Posterior cingulate gyrus (tissue), 11 donors: ENCODE measurements at regions of chr14 and their contacts with region 1.

Region 1: GRCh38 chr14:42224053-42224888 is 617.6 kb downstream of the LRFN5 start:
- DNase-seq: peak in 7 of 10 donors; percentile 23 to 90 (median 71)

Region 2: GRCh38 chr14:43005807-43006206 is 781.5 kb after region 1 on chr14:
- intact Hi-C with region 1: loop called (anchors 10 kb)
- DNase-seq: no peak